Adrenal gland (tissue), 19 donors: ENCODE measurements at regions of chr5 and their contacts with region 1.

Region 1: GRCh38 chr5:71492817-71493615 is 37.6 kb downstream of the BDP1 start:
- DNase-seq: peak in 1 of 7 donors; percentile 19
- H3K4me3 ChIP-seq: no peak overlapping the region
- H3K27ac ChIP-seq: no peak overlapping the region
- H3K4me1 ChIP-seq: peaks cover 12 to 15% of the 10 kb centered on the region in 2 donors
- H3K27me3 ChIP-seq: no peaks in the 10 kb centered on the region
- CTCF ChIP-seq: no peak
- POLR2A ChIP-seq: no peak

Region 2: DNA sequence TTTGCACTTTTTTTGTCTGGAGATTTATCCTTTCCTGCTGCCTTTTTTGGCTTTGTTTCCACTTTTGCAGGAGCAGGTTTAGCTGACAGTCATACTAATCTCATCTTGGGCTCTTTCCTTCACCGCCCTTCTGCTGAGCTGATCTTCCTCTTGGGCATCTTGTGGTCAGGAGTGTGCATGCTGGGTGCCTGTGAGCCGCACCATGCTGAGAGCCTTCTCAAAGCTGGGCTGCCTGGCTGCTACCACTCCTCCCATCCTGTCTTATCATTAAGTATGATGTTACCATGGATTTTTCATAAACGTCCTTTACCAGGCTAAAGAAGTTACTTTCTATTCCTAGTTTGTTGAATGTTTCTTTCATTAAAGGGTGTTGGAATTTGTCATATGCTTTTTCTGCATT is 44.7 kb after region 1 on chr5:
- intact Hi-C with region 1: loop called in 1 of 2 experiments (anchors 10 kb)
- DNase-seq: no peak
- H3K4me3 ChIP-seq: no peak overlapping the region
- H3K27ac ChIP-seq: no peak overlapping the region
- H3K4me1 ChIP-seq: peaks cover 4 to 12% of the 10 kb centered on the region in 2 donors
- H3K27me3 ChIP-seq: no peaks in the 10 kb centered on the region
- CTCF ChIP-seq: no peak
- POLR2A ChIP-seq: no peak